Activated CD4-positive, alpha-beta memory T cell treated with anti-CD3 and anti-CD28 coated beads, Interleukin-2, amount 10 ng/mL, durations not matched to agents 7 days and 5 days (primary cell): ENCODE measurements at regions of chr6 and their contacts with region 1.

Region 1: DNA sequence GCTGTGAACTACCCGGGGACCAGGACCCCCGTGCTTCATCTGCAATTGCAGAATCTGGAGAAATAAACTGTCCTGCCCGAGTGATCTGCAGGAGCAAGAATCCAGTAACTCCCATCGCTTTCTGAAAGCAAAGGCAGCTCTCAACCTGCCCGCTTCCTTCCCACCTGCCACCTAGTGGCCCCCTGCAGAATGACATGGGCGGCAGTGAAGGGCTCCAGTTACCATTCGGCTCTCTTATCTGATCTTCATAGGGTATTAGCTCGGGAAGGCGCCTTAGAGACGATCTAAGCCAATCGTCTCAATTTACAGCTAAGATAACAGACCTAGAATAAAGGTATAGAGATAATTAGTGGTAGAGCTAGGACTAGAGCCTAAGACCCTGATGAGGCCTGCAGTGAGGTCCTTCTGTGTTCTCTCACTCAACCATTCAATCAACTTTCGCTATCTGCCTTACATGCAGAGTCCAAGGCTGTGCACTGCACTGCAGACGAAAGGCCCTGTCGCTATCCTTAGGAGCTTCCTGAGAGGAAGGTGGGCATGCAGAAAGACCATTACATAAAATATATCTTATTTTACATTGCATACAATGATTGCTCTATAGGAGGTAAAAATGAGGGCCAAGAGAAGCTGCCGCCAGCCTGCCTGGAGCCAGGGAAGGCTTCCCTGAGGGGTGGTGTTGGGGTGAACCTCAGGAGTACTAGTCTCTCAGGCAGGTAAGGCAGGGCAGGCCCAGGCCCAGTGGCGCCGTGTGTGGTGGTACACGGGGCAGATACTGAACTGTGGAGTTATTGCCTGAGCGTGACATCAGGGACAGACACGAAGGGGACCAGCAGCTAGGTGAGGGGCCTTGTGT is 7.1 kb upstream of the PSMG4 start:
- DNase-seq: peak; percentile 83
- H3K4me3 Mint-ChIP-seq: no peak overlapping the region
- H3K27ac Mint-ChIP-seq: no peak overlapping the region
- H3K4me1 Mint-ChIP-seq: peaks cover 14% of the 10 kb centered on the region
- H3K27me3 Mint-ChIP-seq: peaks cover 11% of the 10 kb centered on the region

Region 2: DNA sequence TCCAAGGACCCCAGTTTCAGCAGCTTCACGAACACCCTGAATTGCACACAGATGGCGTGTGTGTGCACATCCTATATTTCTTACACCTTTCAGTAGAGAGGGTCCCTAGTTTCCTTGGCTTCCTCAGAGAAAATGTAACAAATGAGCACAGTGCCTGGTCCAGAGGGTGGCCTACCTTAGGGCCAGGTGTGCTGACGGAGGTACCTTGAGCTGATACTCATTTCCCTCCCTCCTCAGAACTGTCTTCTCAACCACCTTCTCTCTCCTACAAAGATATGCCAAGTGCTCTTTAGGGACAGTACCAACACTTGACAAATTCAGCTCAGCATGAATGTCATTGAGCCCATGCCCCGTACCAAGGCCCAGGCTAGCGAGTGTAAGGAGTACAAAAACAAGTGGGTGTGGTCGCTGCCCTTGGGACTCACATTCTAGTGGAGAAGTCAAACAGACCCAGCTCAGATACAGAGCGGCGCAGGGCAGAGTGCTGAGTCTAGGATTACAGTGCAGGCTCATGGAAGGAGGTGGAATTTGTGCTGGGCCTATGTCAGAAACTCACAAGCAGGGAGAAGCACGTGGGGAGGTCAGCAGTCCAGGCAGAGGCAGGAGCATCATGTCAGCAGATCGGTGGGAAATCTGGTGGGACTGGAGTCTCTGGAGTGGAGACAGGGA is 142.8 kb before region 1 on chr6:
- CTCF ChIA-PET with region 1: no interaction called
- POLR2A ChIA-PET with region 1: no interaction called
- DNase-seq: no peak
- H3K4me3 Mint-ChIP-seq: no peak overlapping the region
- H3K27ac Mint-ChIP-seq: no peak overlapping the region
- H3K4me1 Mint-ChIP-seq: no peaks in the 10 kb centered on the region
- H3K27me3 Mint-ChIP-seq: no peaks in the 10 kb centered on the region

Region 3: GRCh38 chr6:3125815-3126214 is 125.9 kb before region 1 on chr6:
- CTCF ChIA-PET with region 1: interaction called, 42 read pairs
- POLR2A ChIA-PET with region 1: no interaction called
- DNase-seq: no peak
- H3K4me3 Mint-ChIP-seq: no peak overlapping the region
- H3K27ac Mint-ChIP-seq: no peak overlapping the region
- H3K4me1 Mint-ChIP-seq: peaks cover 6% of the 10 kb centered on the region
- H3K27me3 Mint-ChIP-seq: peaks cover under 1% of the 10 kb centered on the region

Region 4: GRCh38 chr6:3157131-3157927 is 94.4 kb before region 1 on chr6 and contains the start of gene TUBB2A:
- CTCF ChIA-PET with region 1: interaction called, 17 read pairs
- POLR2A ChIA-PET with region 1: interaction called, 4 read pairs
- DNase-seq: peak; percentile 86
- H3K4me3 Mint-ChIP-seq: peak within 1 kb of the TSS; percentile 80
- H3K27ac Mint-ChIP-seq: peak within 1 kb of the TSS; percentile 74
- H3K4me1 Mint-ChIP-seq: peaks cover 25% of the 10 kb centered on the region
- H3K27me3 Mint-ChIP-seq: peaks cover 46% of the 10 kb centered on the region
- total RNA-seq, gene TUBB2A: 2.5 to 3.6 TPM

Region 5: DNA sequence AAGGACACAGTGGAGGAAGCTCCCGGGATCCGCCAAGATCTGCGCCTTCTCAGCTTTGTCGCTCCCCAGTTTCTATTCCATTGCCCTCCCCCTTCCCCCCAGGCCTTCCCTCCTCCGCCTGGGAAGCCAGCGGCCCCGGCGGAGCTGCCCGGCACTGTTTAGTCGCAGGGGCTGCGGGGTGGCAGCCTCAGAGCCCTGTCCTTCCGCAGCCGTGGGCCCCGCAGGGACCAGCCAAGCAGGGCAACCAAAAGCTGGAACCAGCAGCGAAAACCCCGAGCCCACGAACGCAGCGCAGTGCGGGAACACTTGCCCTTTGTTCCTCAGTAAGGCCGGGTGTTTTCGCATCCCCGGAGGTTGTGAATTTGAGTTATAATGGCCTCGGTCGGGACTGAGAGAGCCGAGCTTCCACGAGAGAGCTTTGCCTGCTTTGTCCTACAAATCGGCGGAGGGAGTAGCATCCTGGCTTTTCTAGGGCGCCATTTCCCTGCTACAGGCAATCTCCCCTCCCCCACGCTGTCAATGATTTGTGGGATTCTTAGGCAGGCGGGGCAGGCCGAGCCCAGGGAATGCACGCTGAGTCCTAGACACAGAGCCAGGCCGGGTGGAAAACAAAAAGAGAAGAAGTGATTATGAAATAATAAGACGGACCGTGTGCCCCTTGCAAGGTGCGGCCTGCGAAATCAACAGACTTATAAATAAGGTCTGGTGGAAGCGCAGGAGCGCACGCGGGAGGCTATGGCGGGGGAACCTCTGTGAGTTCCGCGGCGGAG is 20.3 kb before region 1 on chr6:
- CTCF ChIA-PET with region 1: interaction called, 17 read pairs
- POLR2A ChIA-PET with region 1: no interaction called
- DNase-seq: no peak
- H3K4me3 Mint-ChIP-seq: no peak overlapping the region
- H3K27ac Mint-ChIP-seq: no peak overlapping the region
- H3K4me1 Mint-ChIP-seq: peaks cover 43% of the 10 kb centered on the region
- H3K27me3 Mint-ChIP-seq: peaks cover 86% of the 10 kb centered on the region

Region 6: GRCh38 chr6:3324262-3324942 is 72.7 kb after region 1 on chr6:
- CTCF ChIA-PET with region 1: no interaction called
- POLR2A ChIA-PET with region 1: no interaction called
- DNase-seq: peak; percentile 14
- H3K4me3 Mint-ChIP-seq: no peak overlapping the region
- H3K27ac Mint-ChIP-seq: no peak overlapping the region
- H3K4me1 Mint-ChIP-seq: peaks cover 6% of the 10 kb centered on the region
- H3K27me3 Mint-ChIP-seq: no peaks in the 10 kb centered on the region